Caco-2 (cell line): ENCODE measurements at regions of chr2 and their contacts with region 1.

Region 1: DNA sequence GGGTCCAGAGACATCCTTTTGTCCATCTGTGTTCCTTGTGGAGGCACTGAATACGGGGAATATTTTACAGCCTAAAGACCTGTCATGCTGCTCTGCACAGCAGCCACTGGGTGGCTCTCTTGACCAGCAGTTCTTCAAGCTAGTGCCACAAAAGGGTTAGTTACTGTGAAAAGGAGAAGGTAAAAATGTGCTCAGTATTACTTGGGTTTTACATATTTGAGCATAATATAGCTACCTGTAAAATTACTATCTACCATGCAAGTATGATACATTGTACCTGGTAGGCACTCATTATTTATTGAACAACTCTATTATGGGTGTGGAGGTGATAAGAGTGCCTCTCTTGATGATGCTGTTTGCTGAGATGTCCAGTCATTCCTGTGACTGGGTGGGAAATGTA is 23.6 kb downstream of the FZD5 start:
- DNase-seq: peak; percentile 73 to 78
- H3K4me3 ChIP-seq: no peak overlapping the region
- H3K4me3 Mint-ChIP-seq: no peak overlapping the region
- H3K27ac Mint-ChIP-seq: peak overlapping the region; percentile 12
- H3K4me1 ChIP-seq: peaks cover 52% of the 10 kb centered on the region
- H3K4me1 Mint-ChIP-seq: peaks cover 23% of the 10 kb centered on the region
- H3K27me3 ChIP-seq: no peaks in the 10 kb centered on the region
- H3K27me3 Mint-ChIP-seq: no peaks in the 10 kb centered on the region
- CTCF ChIP-seq: peak; percentile 94 to 95

Region 2: GRCh38 chr2:207115715-207116364 is 630.3 kb before region 1 on chr2:
- CTCF ChIA-PET with region 1: no interaction called
- POLR2A ChIA-PET with region 1: no interaction called
- intact Hi-C with region 1: no loop called
- DNase-seq: peak in 1 of 2 experiments; percentile 5
- H3K4me3 ChIP-seq: no peak overlapping the region
- H3K4me3 Mint-ChIP-seq: no peak overlapping the region
- H3K27ac Mint-ChIP-seq: no peak overlapping the region
- H3K4me1 ChIP-seq: no peaks in the 10 kb centered on the region
- H3K4me1 Mint-ChIP-seq: no peaks in the 10 kb centered on the region
- H3K27me3 ChIP-seq: no peaks in the 10 kb centered on the region; the same call in 1 of the 2 replicates
- H3K27me3 Mint-ChIP-seq: peaks cover 8% of the 10 kb centered on the region
- CTCF ChIP-seq: peak in 1 of 2 experiments; percentile 5

Region 3: GRCh38 chr2:207698301-207698700 is 47.8 kb before region 1 on chr2:
- CTCF ChIA-PET with region 1: no interaction called
- POLR2A ChIA-PET with region 1: no interaction called
- intact Hi-C with region 1: no loop called
- DNase-seq: no peak
- H3K4me3 ChIP-seq: no peak overlapping the region
- H3K4me3 Mint-ChIP-seq: no peak overlapping the region
- H3K27ac Mint-ChIP-seq: no peak overlapping the region
- H3K4me1 ChIP-seq: peaks cover 1% of the 10 kb centered on the region
- H3K4me1 Mint-ChIP-seq: no peaks in the 10 kb centered on the region
- H3K27me3 ChIP-seq: no peaks in the 10 kb centered on the region
- H3K27me3 Mint-ChIP-seq: no peaks in the 10 kb centered on the region
- CTCF ChIP-seq: no peak

Region 4: DNA sequence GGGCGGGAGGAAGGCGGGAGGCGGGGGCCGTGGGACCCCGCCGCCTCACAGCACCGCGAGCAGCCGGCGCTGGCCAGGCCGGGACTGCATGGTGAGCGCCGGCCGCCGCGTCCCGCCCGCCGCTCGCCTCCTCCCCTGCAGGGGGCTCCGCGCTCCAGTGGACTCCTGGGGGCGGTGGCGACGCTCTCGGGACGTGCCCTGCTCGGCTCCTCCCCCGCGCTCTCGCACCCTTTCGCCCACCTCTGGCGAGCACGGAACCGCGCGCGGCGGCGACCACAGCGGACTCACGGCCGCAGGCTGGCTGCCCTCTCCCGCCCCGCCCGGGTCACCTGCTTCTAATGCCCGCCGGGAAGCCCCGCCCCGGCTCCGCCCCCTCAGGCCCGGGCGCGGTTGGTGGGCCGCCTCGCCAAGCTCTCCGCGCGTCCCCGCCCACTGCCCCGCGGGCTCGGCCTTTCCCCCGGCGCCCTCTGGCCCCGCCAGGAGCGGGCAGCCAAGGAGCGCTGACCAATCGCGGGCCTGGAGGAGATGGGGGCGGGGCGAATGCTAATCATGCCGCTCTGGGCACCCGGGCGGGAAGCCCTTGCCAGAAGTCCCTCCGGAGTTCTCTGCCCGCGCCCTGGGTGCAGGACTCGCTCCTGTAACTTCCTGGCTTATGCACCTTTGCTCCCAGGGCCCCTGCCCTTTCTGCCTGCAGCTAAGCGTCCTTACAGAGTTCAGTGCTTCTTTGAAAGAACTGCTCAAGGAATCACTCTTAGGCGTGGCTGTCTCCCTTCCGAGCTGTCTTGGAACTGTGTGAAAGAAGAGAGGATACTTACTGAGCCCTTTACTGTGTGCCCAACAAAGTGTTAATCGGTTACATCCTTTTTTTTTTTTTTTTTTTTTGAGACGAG is 23.7 kb after region 1 on chr2 and contains the start of gene FZD5:
- CTCF ChIA-PET with region 1: interaction called, 7 read pairs
- POLR2A ChIA-PET with region 1: interaction called, 3 read pairs
- intact Hi-C with region 1: loop called (anchors 1 kb)
- DNase-seq: peak; percentile 99 to 100
- H3K4me3 ChIP-seq: peak within 1 kb of the TSS; percentile 81
- H3K4me3 Mint-ChIP-seq: peak within 1 kb of the TSS; percentile 96
- H3K27ac Mint-ChIP-seq: peak within 1 kb of the TSS; percentile 88
- H3K4me1 ChIP-seq: peaks cover 60% of the 10 kb centered on the region
- H3K4me1 Mint-ChIP-seq: peaks cover 48% of the 10 kb centered on the region
- H3K27me3 ChIP-seq: no peaks in the 10 kb centered on the region
- H3K27me3 Mint-ChIP-seq: no peaks in the 10 kb centered on the region
- CTCF ChIP-seq: peak; percentile 64 to 68
- total RNA-seq, gene FZD5: 59.1 and 61.4 TPM in 2 replicates

Region 5: GRCh38 chr2:207930747-207931146 is 184.6 kb after region 1 on chr2:
- CTCF ChIA-PET with region 1: no interaction called
- POLR2A ChIA-PET with region 1: interaction called, 3 read pairs
- intact Hi-C with region 1: loop called (anchors 2 kb)
- DNase-seq: peak; percentile 86 to 89
- H3K4me3 ChIP-seq: peak overlapping the region; percentile 19
- H3K4me3 Mint-ChIP-seq: peak overlapping the region; percentile 79
- H3K27ac Mint-ChIP-seq: peak overlapping the region; percentile 87
- H3K4me1 ChIP-seq: peaks cover 77% of the 10 kb centered on the region
- H3K4me1 Mint-ChIP-seq: peaks cover 40% of the 10 kb centered on the region
- H3K27me3 ChIP-seq: no peaks in the 10 kb centered on the region
- H3K27me3 Mint-ChIP-seq: no peaks in the 10 kb centered on the region
- CTCF ChIP-seq: peak in 1 of 2 experiments; percentile 23

Region 6: DNA sequence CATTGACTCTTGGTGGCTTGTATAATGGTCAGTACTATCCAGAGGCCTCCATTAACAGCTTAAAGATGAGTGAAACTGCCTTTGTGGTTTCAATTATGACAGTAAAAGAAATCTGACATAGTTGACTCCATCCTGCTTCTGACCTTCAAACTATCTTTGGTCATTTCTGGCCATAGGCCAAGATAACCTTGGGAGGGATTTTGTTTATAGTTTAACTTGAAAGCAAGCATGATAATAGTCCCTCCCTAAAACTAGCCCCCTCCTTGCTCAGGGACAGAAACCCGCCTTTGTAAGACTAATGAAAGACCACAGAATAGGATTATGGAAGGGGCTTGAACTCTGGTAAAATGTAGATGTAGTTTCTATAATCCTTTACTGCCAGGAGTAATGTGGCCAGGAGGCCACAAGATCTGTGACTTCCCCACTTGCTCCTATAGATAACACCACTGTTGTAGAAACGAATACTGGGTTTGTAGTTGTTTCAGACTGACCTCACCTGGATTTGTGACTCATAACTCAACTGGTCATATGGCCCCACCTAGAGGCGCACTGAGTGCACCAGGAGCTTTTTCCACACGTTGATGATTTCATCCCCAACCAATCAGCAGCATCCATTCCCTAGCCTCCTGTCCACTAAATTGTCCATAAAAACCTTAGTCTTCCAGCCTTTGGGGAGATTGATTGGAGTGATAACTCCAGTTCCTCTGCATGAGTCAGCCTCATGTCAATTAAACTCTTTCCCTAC is 287.8 kb after region 1 on chr2:
- CTCF ChIA-PET with region 1: interaction called, 77 read pairs
- POLR2A ChIA-PET with region 1: no interaction called
- intact Hi-C with region 1: loop called (anchors 1 kb)
- DNase-seq: peak; percentile 82 to 85
- H3K4me3 ChIP-seq: no peak overlapping the region
- H3K4me3 Mint-ChIP-seq: no peak overlapping the region
- H3K27ac Mint-ChIP-seq: peak overlapping the region; percentile 70
- H3K4me1 ChIP-seq: peaks cover 51% of the 10 kb centered on the region
- H3K4me1 Mint-ChIP-seq: peaks cover 39% of the 10 kb centered on the region
- H3K27me3 ChIP-seq: no peaks in the 10 kb centered on the region
- H3K27me3 Mint-ChIP-seq: no peaks in the 10 kb centered on the region
- CTCF ChIP-seq: peak; percentile 36

Region 7: GRCh38 chr2:208062113-208062512 is 316.0 kb after region 1 on chr2:
- CTCF ChIA-PET with region 1: no interaction called
- POLR2A ChIA-PET with region 1: no interaction called
- intact Hi-C with region 1: loop called (anchors 1 kb)
- DNase-seq: peak in 1 of 2 experiments; percentile 59
- H3K4me3 ChIP-seq: no peak overlapping the region
- H3K4me3 Mint-ChIP-seq: no peak overlapping the region
- H3K27ac Mint-ChIP-seq: no peak overlapping the region
- H3K4me1 ChIP-seq: no peaks in the 10 kb centered on the region
- H3K4me1 Mint-ChIP-seq: no peaks in the 10 kb centered on the region
- H3K27me3 ChIP-seq: no peaks in the 10 kb centered on the region
- H3K27me3 Mint-ChIP-seq: no peaks in the 10 kb centered on the region
- CTCF ChIP-seq: peak; percentile 47 to 56

Region 8: GRCh38 chr2:208254871-208255556 is 508.9 kb after region 1 on chr2 and contains the start of gene IDH1:
- CTCF ChIA-PET with region 1: interaction called, 4 read pairs
- POLR2A ChIA-PET with region 1: no interaction called
- intact Hi-C with region 1: loop called (anchors 1 kb)
- DNase-seq: peak; percentile 98 to 99
- H3K4me3 ChIP-seq: peak within 1 kb of the TSS; percentile 67
- H3K4me3 Mint-ChIP-seq: peak within 1 kb of the TSS; percentile 85
- H3K27ac Mint-ChIP-seq: peak within 1 kb of the TSS; percentile 81
- H3K4me1 ChIP-seq: peaks cover 36% of the 10 kb centered on the region
- H3K4me1 Mint-ChIP-seq: peaks cover 18% of the 10 kb centered on the region
- H3K27me3 ChIP-seq: no peaks in the 10 kb centered on the region
- H3K27me3 Mint-ChIP-seq: no peaks in the 10 kb centered on the region
- CTCF ChIP-seq: peak; percentile 51 to 76
- total RNA-seq, gene IDH1: 265 and 293 TPM in 2 replicates